Cardiac septum (tissue), 1 donor: ENCODE measurements at regions of chr18 and their contacts with region 1.

Region 1: GRCh38 chr18:6920099-6920899 is 190.8 kb downstream of the ARHGAP28 start:
- DNase-seq: no peak

Region 2: GRCh38 chr18:6525604-6526003 is 394.7 kb before region 1 on chr18:
- intact Hi-C with region 1: no loop called
- DNase-seq: no peak

Region 3: DNA sequence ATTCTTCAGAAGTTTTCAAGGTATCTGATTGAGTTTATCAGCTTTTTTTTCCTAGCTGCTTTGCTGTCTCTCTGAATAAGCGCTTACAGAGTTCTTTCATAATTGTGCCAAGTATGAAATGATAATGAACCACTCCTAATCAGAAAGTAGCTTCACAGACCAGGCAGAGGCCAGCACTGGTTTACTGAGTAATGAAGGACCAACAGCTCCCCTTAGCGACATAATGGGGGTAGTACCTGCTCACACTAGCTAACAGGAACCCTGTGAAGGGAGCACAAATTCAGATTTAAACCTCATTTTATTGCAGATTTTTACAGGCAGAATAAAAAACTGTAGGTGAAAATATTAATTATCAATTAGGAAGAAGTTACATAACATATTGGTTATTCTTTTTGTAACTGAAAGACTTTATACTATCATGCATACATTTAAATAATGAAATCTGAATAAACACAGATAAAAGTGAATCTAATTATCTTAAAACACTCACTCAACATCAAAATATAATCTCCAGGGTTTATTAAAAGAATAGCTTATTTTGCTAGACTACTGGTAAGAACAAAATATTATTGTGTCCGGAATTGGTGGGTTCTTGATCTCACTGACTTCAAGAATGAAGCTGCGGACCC is 256.9 kb after region 1 on chr18:
- intact Hi-C with region 1: loop called (anchors 5 kb)
- DNase-seq: no peak